PC-3 (cell line): ENCODE measurements at regions of chr16 and their contacts with region 1.

Region 1: GRCh38 chr16:21554795-21555585 is 44.4 kb upstream of the METTL9 start:
- DNase-seq: peak; percentile 86
- ATAC-seq: peak; percentile 92
- H3K4me3 ChIP-seq: peak overlapping the region; percentile 59
- H3K27ac ChIP-seq: no peak overlapping the region
- H3K4me1 ChIP-seq: peaks cover 5% of the 10 kb centered on the region
- H3K27me3 ChIP-seq: no peaks in the 10 kb centered on the region
- CTCF ChIP-seq: peak; percentile 89

Region 2: DNA sequence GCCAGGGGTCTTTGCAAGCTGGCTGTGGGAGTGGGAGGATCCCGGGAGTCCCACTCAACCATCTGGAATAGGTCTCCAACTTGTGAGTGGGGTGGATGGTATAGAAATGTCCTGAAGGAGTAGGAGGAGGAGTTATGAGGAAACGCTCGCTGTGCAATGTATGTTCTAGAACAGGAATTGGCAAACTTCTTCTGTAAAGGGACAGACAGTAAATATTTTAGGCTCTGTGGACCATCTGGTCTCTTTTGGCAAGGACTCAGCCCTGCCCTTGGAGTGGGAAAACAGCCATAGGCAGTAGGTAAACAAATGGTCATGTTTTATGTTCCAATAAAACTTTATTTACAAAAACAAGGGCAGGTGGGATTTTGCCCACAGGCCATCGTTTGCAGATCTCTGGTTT is 1104.9 kb after region 1 on chr16:
- CTCF ChIA-PET with region 1: no interaction called
- POLR2A ChIA-PET with region 1: interaction called, 14 read pairs
- intact Hi-C with region 1: no loop called
- DNase-seq: peak; percentile 19
- ATAC-seq: peak; percentile 53
- H3K4me3 ChIP-seq: no peak overlapping the region
- H3K27ac ChIP-seq: no peak overlapping the region
- H3K4me1 ChIP-seq: no peaks in the 10 kb centered on the region
- H3K27me3 ChIP-seq: no peaks in the 10 kb centered on the region
- CTCF ChIP-seq: no peak